HepG2 (cell line): ENCODE measurements at regions of chr17 and their contacts with region 1.

Region 1: GRCh38 chr17:75350706-75351105 is 54.8 kb downstream of the GRB2 start:
- DNase-seq: no peak
- ATAC-seq: peak; percentile 41; the same call in 2 of the 3 replicates
- H3K4me3 ChIP-seq: no peak overlapping the region
- H3K27ac ChIP-seq: no peak overlapping the region
- H3K4me1 ChIP-seq: peaks cover 76% of the 10 kb centered on the region
- H3K27me3 ChIP-seq: no peaks in the 10 kb centered on the region
- CTCF ChIP-seq: no peak
- EP300 ChIP-seq: no peak
- POLR2A ChIP-seq: no peak
- RAD21 ChIP-seq: no peak

Region 2: DNA sequence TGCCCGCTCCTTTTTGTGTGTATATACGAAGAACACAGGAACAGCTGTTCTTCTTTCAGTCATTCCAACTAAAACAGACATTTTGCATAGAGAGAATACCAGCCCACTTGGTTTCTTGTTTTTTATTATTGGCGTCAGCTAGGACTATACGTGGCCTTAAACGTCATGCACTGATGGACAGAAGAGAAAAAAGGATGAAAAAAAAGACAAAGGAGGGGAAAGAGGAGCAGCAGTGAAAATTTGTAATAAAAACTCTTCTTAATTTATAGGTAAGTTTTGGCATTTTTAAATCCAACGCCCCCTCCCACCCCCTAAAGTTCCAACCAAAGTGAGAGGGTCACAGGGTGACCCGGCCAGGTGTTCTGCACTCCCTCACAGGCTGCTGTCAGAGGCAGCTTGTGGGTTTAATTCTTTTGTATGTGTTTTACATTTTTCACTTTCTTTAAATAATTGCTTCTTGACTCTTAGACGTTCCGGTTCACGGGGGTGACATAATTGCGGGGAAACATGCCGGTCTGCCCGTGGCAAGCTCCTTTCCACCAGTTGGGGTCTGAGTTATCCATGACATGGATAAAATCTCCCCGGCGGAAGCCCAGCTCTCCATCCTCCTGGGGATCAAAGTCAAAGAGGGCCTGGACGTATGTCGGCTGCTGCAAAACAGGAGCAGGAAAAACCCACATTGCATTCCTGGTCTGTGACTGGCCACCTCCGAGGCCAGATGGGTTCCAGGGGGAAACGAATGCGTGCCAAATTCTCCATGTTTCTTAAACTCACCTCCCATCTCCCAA is 30.6 kb before region 1 on chr17:
- CTCF ChIA-PET with region 1: no interaction called
- POLR2A ChIA-PET with region 1: no interaction called
- in situ Hi-C with region 1: no loop called
- intact Hi-C with region 1: loop called (anchors 1 kb)
- DNase-seq: no peak
- ATAC-seq: no peak
- H3K4me3 ChIP-seq: no peak overlapping the region
- H3K27ac ChIP-seq: no peak overlapping the region
- H3K4me1 ChIP-seq: no peaks in the 10 kb centered on the region
- H3K27me3 ChIP-seq: no peaks in the 10 kb centered on the region
- CTCF ChIP-seq: no peak
- EP300 ChIP-seq: no peak
- POLR2A ChIP-seq: no peak
- RAD21 ChIP-seq: no peak